Activated CD4-positive, alpha-beta T cell treated with anti-CD3 and anti-CD28 coated beads, Interleukin-2, amount 10 ng/mL, durations not matched to agents 24 days and 14 days (primary cell): ENCODE measurements at regions of chr14 and their contacts with region 1.

Region 1: DNA sequence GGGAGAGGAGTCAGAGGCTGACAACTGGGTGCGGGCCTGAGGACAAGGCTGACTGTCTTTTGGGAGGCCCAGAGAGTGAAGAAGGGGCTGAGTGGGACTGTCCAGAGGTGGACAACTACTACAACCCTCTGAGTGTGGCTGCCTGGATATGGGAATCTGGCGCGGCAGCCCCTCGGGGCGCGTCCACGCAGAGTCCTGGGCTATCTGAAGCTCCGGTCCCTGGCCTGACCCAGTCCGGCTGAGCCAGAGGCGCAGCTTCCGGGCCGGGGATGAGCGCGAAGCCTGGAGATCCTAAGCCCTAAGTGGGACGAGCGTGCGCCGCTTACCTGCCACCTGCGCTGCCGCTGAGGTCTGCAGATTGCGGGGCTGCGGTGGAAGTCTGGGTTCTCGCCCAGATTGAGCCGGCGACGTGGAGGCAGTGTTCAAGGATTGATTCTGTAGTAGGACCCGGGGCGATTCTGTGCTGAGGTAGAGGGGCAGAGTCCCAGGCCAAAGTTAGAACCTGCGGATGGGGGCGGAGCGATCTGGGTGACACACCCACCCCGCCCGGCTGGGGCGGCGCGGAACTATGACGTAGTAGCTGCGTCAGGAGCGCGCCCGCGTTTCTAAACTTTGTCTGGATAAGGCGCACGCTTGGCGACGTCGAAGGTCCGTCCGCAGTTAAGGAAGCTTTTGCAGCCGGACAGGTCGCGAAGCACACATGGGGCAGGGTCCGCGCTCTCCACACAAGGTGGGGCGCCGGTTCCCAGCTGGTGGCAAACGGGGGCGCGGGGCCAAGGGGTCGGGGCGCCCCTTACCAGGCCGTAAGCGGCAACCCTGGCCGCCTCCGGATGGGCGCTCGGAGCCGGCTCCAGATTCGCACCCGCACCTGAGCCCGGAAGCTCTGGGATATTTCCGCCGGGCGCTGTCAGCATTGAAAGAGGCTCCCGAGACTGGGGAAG is at the starts of genes DHRS1 and NOP9:
- DNase-seq: peak; percentile 98
- H3K4me3 Mint-ChIP-seq: peak within 1 kb of the TSS; percentile 86
- H3K27ac Mint-ChIP-seq: peak within 1 kb of the TSS; percentile 91
- H3K4me1 Mint-ChIP-seq: peaks cover 36% of the 10 kb centered on the region
- H3K27me3 Mint-ChIP-seq: no peaks in the 10 kb centered on the region
- total RNA-seq, gene DHRS1: 10.1 and 10.3 TPM in 2 replicates
- total RNA-seq, gene NOP9: 48.3 and 52.2 TPM in 2 replicates

Region 2: GRCh38 chr14:24146978-24147760 is 152.4 kb before region 1 on chr14 and contains the start of gene RNF31:
- intact Hi-C with region 1: loop called (anchors 2 kb)
- DNase-seq: peak; percentile 99
- H3K4me3 Mint-ChIP-seq: peak within 1 kb of the TSS; percentile 97
- H3K27ac Mint-ChIP-seq: peak within 1 kb of the TSS; percentile 99
- H3K4me1 Mint-ChIP-seq: peaks cover 59% of the 10 kb centered on the region
- H3K27me3 Mint-ChIP-seq: no peaks in the 10 kb centered on the region
- total RNA-seq, gene RNF31: 95.1 and 95.6 TPM in 2 replicates

Region 3: GRCh38 chr14:24232121-24232644 is 67.3 kb before region 1 on chr14 and contains the start of gene NEDD8:
- intact Hi-C with region 1: loop called (anchors 1 kb)
- DNase-seq: peak; percentile 96
- H3K4me3 Mint-ChIP-seq: peak within 1 kb of the TSS; percentile 92
- H3K27ac Mint-ChIP-seq: peak within 1 kb of the TSS; percentile 92
- H3K4me1 Mint-ChIP-seq: peaks cover 41% of the 10 kb centered on the region
- H3K27me3 Mint-ChIP-seq: no peaks in the 10 kb centered on the region
- total RNA-seq, gene NEDD8: 188 and 190 TPM in 2 replicates

Region 4: GRCh38 chr14:24310646-24311604 is 11.4 kb after region 1 on chr14 and contains the start of gene LTB4R:
- intact Hi-C with region 1: loop called (anchors 1 kb)
- DNase-seq: peak; percentile 89
- H3K4me3 Mint-ChIP-seq: peak within 1 kb of the TSS; percentile 86
- H3K27ac Mint-ChIP-seq: peak within 1 kb of the TSS; percentile 91
- H3K4me1 Mint-ChIP-seq: peaks cover 68% of the 10 kb centered on the region
- H3K27me3 Mint-ChIP-seq: no peaks in the 10 kb centered on the region
- total RNA-seq, gene LTB4R: 12.2 and 14.2 TPM in 2 replicates

Region 5: GRCh38 chr14:24368562-24369252 is 69.2 kb after region 1 on chr14:
- intact Hi-C with region 1: no loop called
- DNase-seq: no peak
- H3K4me3 Mint-ChIP-seq: peak overlapping the region; percentile 47
- H3K27ac Mint-ChIP-seq: no peak overlapping the region
- H3K4me1 Mint-ChIP-seq: peaks cover 18% of the 10 kb centered on the region
- H3K27me3 Mint-ChIP-seq: peaks cover 56% of the 10 kb centered on the region